CD8-positive, alpha-beta T cell (primary cell): ENCODE measurements at regions of chr5 and their contacts with region 1.

Region 1: GRCh38 chr5:131441184-131441583 is 177.3 kb downstream of the CDC42SE2 start:
- DNase-seq: no peak
- ATAC-seq: no peak
- H3K4me3 ChIP-seq: no peak overlapping the region
- H3K4me3 Mint-ChIP-seq: no peak overlapping the region
- H3K27ac ChIP-seq: no peak overlapping the region
- H3K27ac Mint-ChIP-seq: peak overlapping the region; percentile 27
- H3K4me1 ChIP-seq: no peaks in the 10 kb centered on the region
- H3K4me1 Mint-ChIP-seq: peaks cover 21% of the 10 kb centered on the region
- H3K27me3 ChIP-seq: no peaks in the 10 kb centered on the region
- H3K27me3 Mint-ChIP-seq: no peaks in the 10 kb centered on the region
- CTCF ChIP-seq: no peak

Region 2: GRCh38 chr5:131460867-131461572 is 19.8 kb after region 1 on chr5:
- CTCF ChIA-PET with region 1: no interaction called
- POLR2A ChIA-PET with region 1: no interaction called
- intact Hi-C with region 1: loop called in 1 of 2 experiments (anchors 2 kb)
- DNase-seq: no peak
- ATAC-seq: no peak
- H3K4me3 ChIP-seq: no peak overlapping the region
- H3K4me3 Mint-ChIP-seq: no peak overlapping the region
- H3K27ac ChIP-seq: no peak overlapping the region
- H3K27ac Mint-ChIP-seq: peak overlapping the region; percentile 77
- H3K4me1 ChIP-seq: peaks cover 19% of the 10 kb centered on the region
- H3K4me1 Mint-ChIP-seq: peaks cover 53% of the 10 kb centered on the region
- H3K27me3 ChIP-seq: no peaks in the 10 kb centered on the region
- H3K27me3 Mint-ChIP-seq: no peaks in the 10 kb centered on the region
- CTCF ChIP-seq: no peak

Region 3: DNA sequence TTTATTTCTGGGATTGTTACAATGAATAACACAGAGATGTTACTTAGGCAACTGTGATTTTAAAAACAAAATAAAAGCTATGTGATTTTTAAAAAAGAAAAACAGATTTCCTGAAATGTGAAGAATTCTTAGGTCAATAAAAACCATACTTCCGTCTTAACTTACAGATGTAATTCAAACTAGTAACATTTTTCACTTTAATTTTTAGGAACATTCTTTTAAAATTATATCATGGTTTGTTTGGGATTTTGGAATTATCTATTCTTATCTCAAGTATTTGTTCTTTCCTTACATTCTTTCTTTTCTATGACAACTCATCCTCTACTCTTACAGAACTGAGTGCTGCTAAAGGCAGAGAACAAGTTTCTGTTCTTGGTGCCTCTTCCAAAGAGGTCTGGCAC is 34.4 kb after region 1 on chr5:
- CTCF ChIA-PET with region 1: no interaction called
- POLR2A ChIA-PET with region 1: no interaction called
- intact Hi-C with region 1: loop called in 1 of 2 experiments (anchors 5 kb)
- DNase-seq: no peak
- ATAC-seq: no peak
- H3K4me3 ChIP-seq: no peak overlapping the region
- H3K4me3 Mint-ChIP-seq: no peak overlapping the region
- H3K27ac ChIP-seq: no peak overlapping the region
- H3K27ac Mint-ChIP-seq: peak overlapping the region; percentile 52
- H3K4me1 ChIP-seq: peaks cover 13% of the 10 kb centered on the region
- H3K4me1 Mint-ChIP-seq: peaks cover 48% of the 10 kb centered on the region
- H3K27me3 ChIP-seq: no peaks in the 10 kb centered on the region
- H3K27me3 Mint-ChIP-seq: no peaks in the 10 kb centered on the region
- CTCF ChIP-seq: no peak

Region 4: GRCh38 chr5:131496400-131497007 is 55.3 kb after region 1 on chr5:
- CTCF ChIA-PET with region 1: no interaction called
- POLR2A ChIA-PET with region 1: no interaction called
- intact Hi-C with region 1: loop called in 1 of 2 experiments (anchors 5 kb)
- DNase-seq: no peak
- ATAC-seq: no peak
- H3K4me3 ChIP-seq: no peak overlapping the region
- H3K4me3 Mint-ChIP-seq: no peak overlapping the region
- H3K27ac ChIP-seq: no peak overlapping the region
- H3K27ac Mint-ChIP-seq: no peak overlapping the region
- H3K4me1 ChIP-seq: no peaks in the 10 kb centered on the region
- H3K4me1 Mint-ChIP-seq: peaks cover 28% of the 10 kb centered on the region
- H3K27me3 ChIP-seq: no peaks in the 10 kb centered on the region
- H3K27me3 Mint-ChIP-seq: no peaks in the 10 kb centered on the region
- CTCF ChIP-seq: no peak